Endothelial cell of umbilical vein (primary cell): ENCODE measurements at regions of chr7 and their contacts with region 1.

Region 1: GRCh38 chr7:116588641-116589594 is 64.1 kb downstream of the CAV1 start:
- DNase-seq: peak; percentile 85
- H3K4me3 ChIP-seq: no peak overlapping the region
- H3K27ac ChIP-seq: peak overlapping the region; percentile 42
- H3K4me1 ChIP-seq: peaks cover 38% of the 10 kb centered on the region
- H3K27me3 ChIP-seq: no peaks in the 10 kb centered on the region
- CTCF ChIP-seq: peak; percentile 10 to 27
- POLR2A ChIP-seq: no peak

Region 2: DNA sequence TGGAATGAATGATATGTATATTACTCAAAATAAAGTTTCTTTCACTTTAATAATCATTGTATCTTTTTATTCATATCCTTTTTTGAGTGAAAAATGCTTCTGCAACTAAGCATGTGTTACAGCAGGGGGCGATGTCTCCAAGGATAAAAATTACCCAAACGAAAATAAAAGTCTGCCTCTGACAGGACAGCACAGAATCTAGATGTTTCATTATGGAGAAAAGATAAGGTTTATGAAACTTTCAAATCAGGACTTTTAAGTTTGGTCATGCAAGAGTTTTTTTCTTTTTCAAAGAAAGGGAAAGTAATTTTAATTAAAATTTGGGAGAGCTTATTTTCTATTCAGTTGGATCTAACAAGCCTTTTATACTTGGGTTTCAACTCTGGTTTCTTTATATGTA is 330.2 kb before region 1 on chr7:
- CTCF ChIA-PET with region 1: interaction called, 87 read pairs
- POLR2A ChIA-PET with region 1: no interaction called
- dilution Hi-C with region 1: no loop called
- intact Hi-C with region 1: loop called (anchors 1 kb)
- DNase-seq: peak; percentile 85
- H3K4me3 ChIP-seq: no peak overlapping the region
- H3K27ac ChIP-seq: peak overlapping the region; percentile 32
- H3K4me1 ChIP-seq: peaks cover 28% of the 10 kb centered on the region
- H3K27me3 ChIP-seq: no peaks in the 10 kb centered on the region
- CTCF ChIP-seq: peak; percentile 43 to 48
- POLR2A ChIP-seq: peak; percentile 22

Region 3: GRCh38 chr7:116511552-116512519 is 77.1 kb before region 1 on chr7:
- CTCF ChIA-PET with region 1: interaction called, 12 read pairs
- POLR2A ChIA-PET with region 1: no interaction called
- dilution Hi-C with region 1: no loop called
- intact Hi-C with region 1: no loop called
- DNase-seq: peak; percentile 96
- H3K4me3 ChIP-seq: peak overlapping the region; percentile 32 to 70 (median 45)
- H3K27ac ChIP-seq: peak overlapping the region; percentile 96
- H3K4me1 ChIP-seq: peaks cover 54% of the 10 kb centered on the region
- H3K27me3 ChIP-seq: no peaks in the 10 kb centered on the region
- CTCF ChIP-seq: no peak
- POLR2A ChIP-seq: peak; percentile 76

Region 4: DNA sequence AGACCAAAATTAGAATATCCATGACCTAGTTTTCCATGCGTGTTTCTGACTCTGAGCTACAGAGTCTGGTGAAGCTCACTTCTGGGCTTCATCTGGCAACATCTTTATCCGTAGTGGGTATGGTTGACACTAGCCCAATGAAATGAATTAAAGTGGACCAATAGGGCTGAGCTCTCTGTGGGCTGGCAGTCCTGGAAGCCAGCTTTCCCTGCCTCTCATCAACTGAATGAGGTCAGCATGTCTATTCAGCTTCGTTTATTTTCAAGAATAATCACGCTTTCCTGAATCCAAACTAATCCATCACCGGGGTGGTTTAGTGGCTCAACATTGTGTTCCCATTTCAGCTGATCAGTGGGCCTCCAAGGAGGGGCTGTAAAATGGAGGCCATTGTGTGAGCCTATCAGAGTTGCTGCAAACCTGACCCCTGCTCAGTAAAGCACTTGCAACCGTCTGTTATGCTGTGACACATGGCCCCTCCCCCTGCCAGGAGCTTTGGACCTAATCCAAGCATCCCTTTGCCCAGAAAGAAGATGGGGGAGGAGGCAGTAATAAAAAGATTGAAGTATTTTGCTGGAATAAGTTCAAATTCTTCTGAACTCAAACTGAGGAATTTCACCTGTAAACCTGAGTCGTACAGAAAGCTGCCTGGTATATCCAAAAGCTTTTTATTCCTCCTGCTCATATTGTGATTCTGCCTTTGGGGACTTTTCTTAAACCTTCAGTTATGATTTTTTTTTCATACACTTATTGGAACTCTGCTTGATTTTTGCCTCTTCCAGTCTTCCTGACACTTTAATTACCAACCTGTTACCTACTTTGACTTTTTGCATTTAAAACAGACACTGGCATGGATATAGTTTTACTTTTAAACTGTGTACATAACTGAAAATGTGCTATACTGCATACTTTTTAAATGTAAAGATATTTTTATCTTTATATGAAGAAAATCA is 28.6 kb before region 1 on chr7:
- CTCF ChIA-PET with region 1: interaction called, 36 read pairs
- POLR2A ChIA-PET with region 1: no interaction called
- dilution Hi-C with region 1: no loop called
- intact Hi-C with region 1: no loop called
- DNase-seq: no peak
- H3K4me3 ChIP-seq: no peak overlapping the region
- H3K27ac ChIP-seq: no peak overlapping the region
- H3K4me1 ChIP-seq: peaks cover 4% of the 10 kb centered on the region
- H3K27me3 ChIP-seq: no peaks in the 10 kb centered on the region
- CTCF ChIP-seq: no peak
- POLR2A ChIP-seq: no peak

Region 5: GRCh38 chr7:116671681-116672595 is 83.0 kb after region 1 on chr7 and contains the start of gene MET:
- CTCF ChIA-PET with region 1: interaction called, 113 read pairs
- POLR2A ChIA-PET with region 1: no interaction called
- dilution Hi-C with region 1: no loop called
- intact Hi-C with region 1: loop called (anchors 1 kb)
- DNase-seq: peak; percentile 86
- H3K4me3 ChIP-seq: peak within 1 kb of the TSS; percentile 72 to 92 (median 80)
- H3K27ac ChIP-seq: peak within 1 kb of the TSS; percentile 81
- H3K4me1 ChIP-seq: peaks cover 27% of the 10 kb centered on the region
- H3K27me3 ChIP-seq: no peaks in the 10 kb centered on the region
- CTCF ChIP-seq: peak; percentile 21 to 62
- POLR2A ChIP-seq: peak; percentile 56
- total RNA-seq, gene MET: 44.5 and 52.0 TPM in 2 replicates

Region 6: DNA sequence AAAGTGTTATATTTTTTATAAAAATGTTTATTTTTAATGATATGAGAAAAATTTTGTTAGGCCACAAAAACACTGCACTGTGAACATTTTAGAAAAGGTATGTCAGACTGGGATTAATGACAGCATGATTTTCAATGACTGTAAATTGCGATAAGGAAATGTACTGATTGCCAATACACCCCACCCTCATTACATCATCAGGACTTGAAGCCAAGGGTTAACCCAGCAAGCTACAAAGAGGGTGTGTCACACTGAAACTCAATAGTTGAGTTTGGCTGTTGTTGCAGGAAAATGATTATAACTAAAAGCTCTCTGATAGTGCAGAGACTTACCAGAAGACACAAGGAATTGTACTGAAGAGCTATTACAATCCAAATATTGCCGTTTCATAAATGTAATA is 208.7 kb after region 1 on chr7:
- CTCF ChIA-PET with region 1: interaction called, 10 read pairs
- POLR2A ChIA-PET with region 1: no interaction called
- dilution Hi-C with region 1: no loop called
- intact Hi-C with region 1: no loop called
- DNase-seq: peak; percentile 46
- H3K4me3 ChIP-seq: no peak overlapping the region
- H3K27ac ChIP-seq: no peak overlapping the region
- H3K4me1 ChIP-seq: peaks cover 7% of the 10 kb centered on the region
- H3K27me3 ChIP-seq: no peaks in the 10 kb centered on the region
- CTCF ChIP-seq: no peak
- POLR2A ChIP-seq: no peak